Activated CD8-positive, alpha-beta T cell treated with anti-CD3 and anti-CD28 coated beads, Interleukin-2, amount 10 ng/mL, durations not matched to agents 7 days and 5 days (primary cell): ENCODE measurements at regions of chr17 and their contacts with region 1.

Region 1: DNA sequence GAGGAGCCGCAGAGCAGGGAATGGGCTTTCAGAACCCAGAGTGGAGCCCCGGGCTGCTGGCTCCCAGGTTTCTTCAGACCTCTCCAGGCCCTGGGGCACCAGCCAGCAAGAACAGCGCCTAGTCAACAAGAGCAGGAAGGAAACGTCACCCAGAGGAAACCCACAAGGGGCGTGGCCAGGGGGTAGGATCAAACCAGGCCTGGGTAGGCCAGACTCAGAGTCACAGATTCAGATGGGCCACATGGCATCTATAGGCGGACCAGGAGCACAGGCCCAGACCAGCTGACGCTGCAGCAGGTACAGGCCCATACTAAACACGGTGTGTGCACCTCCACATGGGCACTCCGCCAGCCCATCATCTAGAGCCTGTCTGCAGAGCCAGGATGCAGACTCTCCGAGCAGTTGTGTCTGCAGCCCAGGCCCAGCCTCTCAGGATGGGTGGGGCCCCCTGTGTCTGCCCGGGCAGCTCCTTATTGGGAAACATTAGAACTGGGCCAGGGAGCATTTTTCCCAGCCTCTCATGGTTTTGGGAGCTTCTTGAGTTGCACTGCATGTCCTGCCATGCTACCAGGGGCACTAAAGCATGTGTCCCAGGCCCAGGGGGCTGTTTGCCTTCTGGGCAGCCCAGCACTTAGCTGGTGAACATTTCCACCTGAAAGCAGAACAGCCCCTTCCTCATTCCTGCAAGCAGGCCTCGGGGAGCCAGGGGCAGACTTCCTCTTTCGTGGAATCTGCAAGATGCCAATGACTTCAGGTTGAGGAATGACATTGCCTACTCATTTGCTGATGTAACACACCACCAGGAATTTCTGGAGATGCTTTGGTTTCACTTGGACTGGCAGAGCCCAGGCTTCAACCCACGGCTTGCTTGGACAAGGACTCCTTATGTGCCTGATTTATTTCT is at the start of gene NLRP1:
- DNase-seq: peak; percentile 98
- ATAC-seq: peak; percentile 95
- H3K4me3 Mint-ChIP-seq: peak within 1 kb of the TSS; percentile 96
- H3K27ac Mint-ChIP-seq: peak within 1 kb of the TSS; percentile 96
- H3K4me1 Mint-ChIP-seq: peaks cover 56% of the 10 kb centered on the region
- H3K27me3 Mint-ChIP-seq: peaks cover 5% of the 10 kb centered on the region
- total RNA-seq, gene NLRP1: 44.5 to 46.1 TPM

Region 2: GRCh38 chr17:5526821-5527598 is 57.6 kb before region 1 on chr17:
- CTCF ChIA-PET with region 1: no interaction called
- POLR2A ChIA-PET with region 1: no interaction called
- DNase-seq: peak; percentile 56
- ATAC-seq: peak; percentile 86
- H3K4me3 Mint-ChIP-seq: no peak overlapping the region
- H3K27ac Mint-ChIP-seq: peak overlapping the region; percentile 62
- H3K4me1 Mint-ChIP-seq: peaks cover 14% of the 10 kb centered on the region
- H3K27me3 Mint-ChIP-seq: no peaks in the 10 kb centered on the region

Region 3: DNA sequence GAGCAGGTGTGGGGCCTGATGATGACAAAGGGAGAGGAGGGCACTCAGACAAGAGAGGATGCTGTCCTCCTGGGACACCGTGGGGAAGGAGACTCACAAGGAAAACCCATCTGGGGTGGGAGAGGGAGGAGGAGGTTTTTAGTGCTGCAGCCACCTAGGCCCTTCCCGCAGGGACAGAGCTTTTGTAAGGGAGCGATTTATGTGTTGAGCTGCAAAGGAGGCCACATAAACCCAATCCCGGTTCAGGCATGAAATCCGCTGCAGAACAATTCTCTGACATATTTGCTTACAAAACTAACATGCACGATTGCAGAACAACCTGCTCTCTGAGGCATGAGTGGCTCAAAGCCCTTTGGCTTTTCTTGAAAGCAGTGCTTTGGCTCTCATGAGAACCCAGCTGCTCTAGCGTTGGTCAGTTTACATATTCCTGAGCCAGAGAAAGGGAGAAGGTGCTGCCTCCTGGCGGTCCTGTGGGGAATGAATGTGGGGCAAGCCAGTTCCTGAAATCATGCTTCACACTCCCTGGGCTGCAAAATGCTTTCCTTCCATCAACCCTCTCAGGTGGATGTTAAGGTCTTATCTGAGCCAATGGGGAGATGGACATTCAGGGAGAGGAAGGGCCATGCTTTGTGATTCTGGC is 122.1 kb after region 1 on chr17:
- CTCF ChIA-PET with region 1: interaction called, 16 read pairs
- POLR2A ChIA-PET with region 1: no interaction called
- DNase-seq: peak; percentile 65
- ATAC-seq: no peak
- H3K4me3 Mint-ChIP-seq: no peak overlapping the region
- H3K27ac Mint-ChIP-seq: no peak overlapping the region
- H3K4me1 Mint-ChIP-seq: no peaks in the 10 kb centered on the region
- H3K27me3 Mint-ChIP-seq: peaks cover 22% of the 10 kb centered on the region